ENCODE measurements at regions of chr7 and their contacts with region 1.

Region 1: GRCh38 chr7:38660427-38661099 is 29.4 kb upstream of the AMPH start:
- DNase-seq: no peak
- H3K4me3 ChIP-seq: no peak overlapping the region
- CTCF ChIP-seq: peak; percentile 83

Region 2: GRCh38 chr7:38040831-38041230 is 619.7 kb before region 1 on chr7:
- CTCF ChIA-PET with region 1: no interaction called
- POLR2A ChIA-PET with region 1: no interaction called
- DNase-seq: no peak
- H3K4me3 ChIP-seq: no peak overlapping the region
- CTCF ChIP-seq: no peak

Region 3: GRCh38 chr7:38398725-38399321 is 261.7 kb before region 1 on chr7:
- CTCF ChIA-PET with region 1: interaction called, 86 read pairs
- POLR2A ChIA-PET with region 1: no interaction called
- DNase-seq: no peak
- H3K4me3 ChIP-seq: no peak overlapping the region
- CTCF ChIP-seq: peak; percentile 75

Region 4: DNA sequence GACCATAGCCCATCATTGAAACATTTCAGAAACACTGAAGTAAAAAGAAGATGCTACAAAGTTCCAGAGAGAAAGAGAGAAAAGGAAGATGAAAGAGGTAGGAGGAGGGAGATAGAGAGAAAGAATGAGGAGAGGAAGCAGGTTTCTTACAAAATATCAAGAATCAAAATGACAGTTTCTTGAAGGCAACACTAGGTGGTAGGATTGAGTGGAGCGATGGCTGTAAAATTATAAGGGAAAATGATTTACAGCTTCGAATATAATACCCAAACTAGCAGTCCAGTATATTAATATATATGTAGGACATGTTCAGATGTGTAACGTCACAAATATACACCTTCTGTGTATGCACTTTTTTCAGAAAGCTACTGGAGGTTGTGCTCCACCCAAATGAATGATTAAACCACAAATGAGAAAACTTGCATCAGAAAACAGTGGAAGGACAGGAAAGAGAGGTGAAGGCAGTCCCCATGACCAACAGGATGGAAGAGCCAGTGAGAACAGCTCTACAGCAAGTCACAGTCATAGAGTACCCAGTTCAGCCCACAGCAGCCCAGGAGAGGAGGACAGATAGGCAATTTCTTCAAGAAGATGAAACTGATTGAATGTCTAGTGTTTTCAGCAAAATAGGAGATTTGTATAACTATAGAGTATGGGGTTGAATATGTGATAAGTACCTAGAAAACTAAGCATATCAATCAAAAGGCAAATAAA is 235.7 kb before region 1 on chr7:
- CTCF ChIA-PET with region 1: interaction called, 14 read pairs
- POLR2A ChIA-PET with region 1: no interaction called
- DNase-seq: no peak
- H3K4me3 ChIP-seq: no peak overlapping the region
- CTCF ChIP-seq: no peak

Region 5: DNA sequence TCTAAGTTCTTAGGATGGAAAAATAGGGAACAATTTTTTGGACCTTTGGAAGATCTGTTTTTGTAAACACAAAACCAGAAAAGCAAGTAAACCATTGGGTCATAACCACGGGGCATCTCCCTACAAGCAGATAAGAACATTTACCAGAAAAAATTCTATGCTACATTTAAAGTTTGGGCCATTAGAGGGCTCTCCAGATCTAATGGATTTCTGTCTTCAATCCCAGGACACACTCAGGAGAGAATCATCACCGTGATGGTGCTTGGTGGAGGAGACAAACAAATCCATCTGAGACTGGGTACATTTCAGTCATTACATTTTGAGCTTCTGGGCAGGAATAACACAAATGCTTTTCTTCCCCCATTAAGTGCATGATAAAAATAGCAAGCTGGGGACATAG is 208.7 kb before region 1 on chr7:
- CTCF ChIA-PET with region 1: interaction called, 72 read pairs
- POLR2A ChIA-PET with region 1: no interaction called
- DNase-seq: no peak
- H3K4me3 ChIP-seq: no peak overlapping the region
- CTCF ChIP-seq: peak; percentile 32

Region 6: GRCh38 chr7:38550836-38551235 is 109.7 kb before region 1 on chr7:
- CTCF ChIA-PET with region 1: no interaction called
- POLR2A ChIA-PET with region 1: no interaction called
- DNase-seq: no peak
- H3K4me3 ChIP-seq: no peak overlapping the region
- CTCF ChIP-seq: no peak

Region 7: GRCh38 chr7:38630720-38631673 is 29.6 kb before region 1 on chr7 and contains the start of gene AMPH:
- CTCF ChIA-PET with region 1: interaction called, 16 read pairs
- POLR2A ChIA-PET with region 1: no interaction called
- DNase-seq: no peak
- H3K4me3 ChIP-seq: peak within 1 kb of the TSS; percentile 63
- CTCF ChIP-seq: no peak

Region 8: GRCh38 chr7:38679419-38679818 is 18.9 kb after region 1 on chr7:
- CTCF ChIA-PET with region 1: interaction called, 10 read pairs
- POLR2A ChIA-PET with region 1: no interaction called
- DNase-seq: no peak
- H3K4me3 ChIP-seq: no peak overlapping the region
- CTCF ChIP-seq: no peak